HEK293 (cell line): ENCODE measurements at regions of chr1 and their contacts with region 1.

Region 1: GRCh38 chr1:237864338-237865244 is 26.1 kb downstream of the ZP4 start:
- H3K4me3 ChIP-seq: peak overlapping the region; percentile 14
- H3K27ac ChIP-seq: no peak overlapping the region
- H3K4me1 ChIP-seq: no peaks in the 10 kb centered on the region
- CTCF ChIP-seq: peak; percentile 93

Region 2: GRCh38 chr1:237677979-237678378 is 186.6 kb before region 1 on chr1:
- CTCF ChIA-PET with region 1: interaction called, 12 read pairs
- POLR2A ChIA-PET with region 1: no interaction called
- H3K4me3 ChIP-seq: no peak overlapping the region
- H3K27ac ChIP-seq: no peak overlapping the region
- H3K4me1 ChIP-seq: no peaks in the 10 kb centered on the region
- CTCF ChIP-seq: peak; percentile 73

Region 3: GRCh38 chr1:237879195-237879594 is 14.6 kb after region 1 on chr1:
- CTCF ChIA-PET with region 1: interaction called, 56 read pairs
- POLR2A ChIA-PET with region 1: no interaction called
- H3K4me3 ChIP-seq: no peak overlapping the region
- H3K27ac ChIP-seq: no peak overlapping the region
- H3K4me1 ChIP-seq: no peaks in the 10 kb centered on the region
- CTCF ChIP-seq: no peak

Region 4: DNA sequence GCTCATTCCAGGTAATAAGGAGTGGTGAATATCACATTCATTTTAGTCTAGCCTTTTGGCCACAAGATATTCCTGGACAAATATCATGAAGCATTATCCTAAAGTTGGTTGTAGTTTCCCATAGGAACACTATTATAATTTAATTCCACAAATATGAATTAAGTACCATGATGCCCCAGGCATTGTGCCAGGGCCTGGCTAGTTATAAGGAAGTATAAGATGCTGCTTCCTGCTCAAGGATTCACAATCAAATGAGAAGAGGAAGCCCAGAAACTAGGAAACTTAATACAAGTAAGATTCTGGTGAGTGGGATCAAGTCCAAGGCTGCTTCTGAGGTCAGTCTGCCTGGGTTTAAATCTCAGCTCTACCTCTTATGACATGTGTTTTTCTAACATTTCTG is 56.7 kb after region 1 on chr1:
- CTCF ChIA-PET with region 1: interaction called, 11 read pairs
- POLR2A ChIA-PET with region 1: no interaction called
- H3K4me3 ChIP-seq: no peak overlapping the region
- H3K27ac ChIP-seq: no peak overlapping the region
- H3K4me1 ChIP-seq: no peaks in the 10 kb centered on the region
- CTCF ChIP-seq: no peak

Region 5: DNA sequence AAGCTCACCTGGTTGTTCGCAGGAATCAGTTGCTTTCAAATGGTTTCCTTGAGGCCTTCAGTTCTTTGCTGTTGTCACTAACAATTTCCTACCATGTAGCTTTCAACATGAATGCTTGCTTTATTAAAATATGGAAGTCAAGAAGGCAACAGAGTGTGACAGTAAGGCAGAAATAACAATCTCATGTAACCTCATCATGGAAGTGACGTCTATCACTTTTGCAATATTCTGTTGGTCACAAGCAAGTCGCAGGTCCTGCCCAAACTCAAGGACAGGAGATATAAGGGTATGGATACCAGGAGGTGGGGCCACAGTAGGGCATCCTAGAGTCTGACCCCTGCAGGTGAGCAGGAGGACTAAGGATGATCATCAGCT is 323.0 kb after region 1 on chr1:
- CTCF ChIA-PET with region 1: interaction called, 10 read pairs
- POLR2A ChIA-PET with region 1: no interaction called
- H3K4me3 ChIP-seq: no peak overlapping the region
- H3K27ac ChIP-seq: no peak overlapping the region
- H3K4me1 ChIP-seq: no peaks in the 10 kb centered on the region
- CTCF ChIP-seq: no peak

Region 6: DNA sequence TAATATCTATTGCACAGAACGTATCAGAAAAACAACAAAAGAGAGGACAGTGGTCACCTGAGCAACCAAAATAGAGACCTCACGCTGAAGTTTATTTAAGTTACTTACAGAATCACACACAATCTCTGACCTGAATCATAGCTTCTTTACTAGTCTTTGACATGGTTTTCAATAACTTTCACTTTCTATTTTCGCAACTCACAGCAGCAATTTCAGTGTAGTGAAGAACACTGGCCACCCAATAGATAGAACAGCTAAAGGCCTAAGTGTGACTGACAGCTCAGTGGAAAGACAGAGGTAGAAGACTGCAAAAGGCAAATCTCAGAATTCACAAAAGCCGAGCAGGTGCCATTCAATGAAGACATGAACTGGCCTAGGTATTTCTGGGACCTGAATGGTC is 1086.2 kb after region 1 on chr1:
- CTCF ChIA-PET with region 1: interaction called, 13 read pairs
- POLR2A ChIA-PET with region 1: no interaction called
- H3K4me3 ChIP-seq: no peak overlapping the region
- H3K27ac ChIP-seq: no peak overlapping the region
- H3K4me1 ChIP-seq: no peaks in the 10 kb centered on the region
- CTCF ChIP-seq: no peak